OCI-LY7 (cell line): ENCODE measurements at regions of chr1 and their contacts with region 1.

Region 1: DNA sequence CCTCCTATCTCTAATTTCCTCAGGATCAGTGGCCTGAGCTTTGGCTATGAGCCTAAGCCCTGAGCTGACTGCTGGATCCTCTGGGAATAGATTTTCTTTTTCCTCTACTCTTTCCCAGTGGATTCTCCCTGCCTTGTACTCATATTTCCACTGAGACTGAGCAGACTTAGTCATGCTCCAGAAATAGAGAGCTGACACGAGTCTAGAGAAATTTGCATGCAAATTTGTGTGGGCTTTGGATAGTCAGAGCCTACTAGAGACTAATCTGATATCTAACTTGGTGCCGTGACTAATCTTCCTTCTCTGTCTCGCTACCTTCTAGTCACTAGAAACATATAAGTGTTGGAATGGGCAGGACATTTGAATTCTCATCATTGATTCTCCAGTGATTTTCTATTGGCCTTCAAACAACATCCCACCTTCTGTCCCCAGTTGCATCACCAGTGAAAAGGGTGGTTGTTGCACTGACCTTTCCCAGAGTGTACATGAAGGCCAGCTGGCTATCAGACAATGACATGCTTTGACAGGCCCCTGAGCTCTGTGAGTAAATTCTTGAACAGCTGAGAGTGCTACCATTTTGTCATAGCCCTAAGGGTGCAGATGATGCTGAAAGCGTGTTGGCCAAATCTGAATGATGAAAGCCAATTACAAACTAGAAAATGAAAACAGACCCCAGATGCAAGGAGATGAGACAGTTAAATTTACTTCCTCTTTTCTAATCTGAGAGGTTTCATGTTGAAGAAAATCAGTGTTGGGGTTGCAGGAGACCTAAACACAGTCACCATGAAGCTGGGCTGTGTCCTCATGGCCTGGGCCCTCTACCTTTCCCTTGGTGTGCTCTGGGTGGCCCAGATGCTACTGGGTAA is at the start of gene FCRLA:
- DNase-seq: peak; percentile 94
- H3K4me3 ChIP-seq: peak within 1 kb of the TSS; percentile 80
- H3K27ac ChIP-seq: peak within 1 kb of the TSS; percentile 96
- H3K4me1 ChIP-seq: peaks cover 55% of the 10 kb centered on the region
- CTCF ChIP-seq: no peak
- total RNA-seq, gene FCRLA: 524 and 672 TPM in 2 replicates

Region 2: GRCh38 chr1:161718559-161719324 is 12.0 kb after region 1 on chr1:
- CTCF ChIA-PET with region 1: interaction called, 4 read pairs
- POLR2A ChIA-PET with region 1: interaction called, 55 read pairs
- intact Hi-C with region 1: no loop called
- DNase-seq: peak; percentile 82
- H3K4me3 ChIP-seq: peak overlapping the region; percentile 52
- H3K27ac ChIP-seq: peak overlapping the region; percentile 95
- H3K4me1 ChIP-seq: peaks cover 83% of the 10 kb centered on the region
- CTCF ChIP-seq: no peak

Region 3: GRCh38 chr1:161726596-161727457 is 20.1 kb after region 1 on chr1:
- CTCF ChIA-PET with region 1: interaction called, 4 read pairs
- POLR2A ChIA-PET with region 1: interaction called, 44 read pairs
- intact Hi-C with region 1: loop called (anchors 1 kb)
- DNase-seq: peak; percentile 89
- H3K4me3 ChIP-seq: peak overlapping the region; percentile 77
- H3K27ac ChIP-seq: peak overlapping the region; percentile 61
- H3K4me1 ChIP-seq: peaks cover 36% of the 10 kb centered on the region
- CTCF ChIP-seq: no peak

Region 4: DNA sequence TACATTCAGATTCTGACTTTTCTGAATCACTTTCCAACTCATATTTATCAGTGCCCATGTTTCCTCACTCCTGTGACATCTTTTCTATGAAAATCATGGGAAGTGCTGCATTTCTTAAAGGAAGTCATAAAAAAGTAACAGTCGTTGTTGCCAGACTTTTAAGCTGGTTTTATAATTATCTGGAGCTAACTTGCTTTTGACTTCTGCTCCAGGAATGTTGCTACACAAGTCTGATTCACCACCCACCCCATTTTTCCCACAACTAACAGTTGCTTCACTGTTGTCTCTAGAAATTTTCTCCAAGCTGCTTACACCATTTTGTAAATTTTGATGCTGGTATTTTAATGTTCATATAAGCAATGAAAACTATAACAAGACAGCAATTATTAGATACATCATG is 26.8 kb after region 1 on chr1:
- CTCF ChIA-PET with region 1: interaction called, 12 read pairs
- POLR2A ChIA-PET with region 1: interaction called, 64 read pairs
- intact Hi-C with region 1: loop called (anchors 1 kb)
- DNase-seq: no peak
- H3K4me3 ChIP-seq: no peak overlapping the region
- H3K27ac ChIP-seq: no peak overlapping the region
- H3K4me1 ChIP-seq: peaks cover 19% of the 10 kb centered on the region
- CTCF ChIP-seq: no peak

Region 5: DNA sequence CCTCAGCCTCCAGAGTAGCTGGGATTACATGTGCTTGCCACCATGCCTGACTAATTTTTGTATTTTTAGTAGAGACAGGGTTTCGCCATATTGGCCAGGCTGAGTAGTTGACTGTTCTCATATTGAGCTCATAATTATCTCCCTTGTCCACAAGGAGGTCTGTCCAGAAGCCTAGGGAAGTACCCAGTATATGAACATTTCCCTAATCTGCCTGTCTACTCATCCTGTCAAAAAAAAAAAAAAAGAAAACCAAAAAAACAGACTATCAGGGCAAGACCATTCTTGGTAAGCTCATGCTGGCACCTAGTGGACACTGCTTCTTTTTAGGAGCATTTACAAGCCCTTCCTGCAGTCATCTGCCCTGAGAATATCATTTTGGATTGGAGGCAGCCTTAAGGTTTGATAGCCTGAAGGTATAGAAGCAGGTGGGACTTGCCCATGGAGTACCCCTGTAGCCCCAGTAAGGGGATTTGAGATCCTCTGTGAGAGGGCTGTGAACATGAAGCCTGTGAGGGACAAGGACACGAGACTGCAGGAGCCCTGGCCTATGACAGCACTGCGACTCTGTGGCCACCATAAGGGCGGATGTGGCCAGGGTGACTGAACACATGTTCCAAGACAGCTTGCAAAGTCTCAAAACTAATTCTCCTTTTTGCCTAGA is 32.0 kb after region 1 on chr1:
- CTCF ChIA-PET with region 1: interaction called, 12 read pairs
- POLR2A ChIA-PET with region 1: interaction called, 64 read pairs
- intact Hi-C with region 1: loop called (anchors 1 kb)
- DNase-seq: peak; percentile 89
- H3K4me3 ChIP-seq: no peak overlapping the region
- H3K27ac ChIP-seq: peak overlapping the region; percentile 50
- H3K4me1 ChIP-seq: peaks cover 48% of the 10 kb centered on the region
- CTCF ChIP-seq: peak; percentile 85

Region 6: DNA sequence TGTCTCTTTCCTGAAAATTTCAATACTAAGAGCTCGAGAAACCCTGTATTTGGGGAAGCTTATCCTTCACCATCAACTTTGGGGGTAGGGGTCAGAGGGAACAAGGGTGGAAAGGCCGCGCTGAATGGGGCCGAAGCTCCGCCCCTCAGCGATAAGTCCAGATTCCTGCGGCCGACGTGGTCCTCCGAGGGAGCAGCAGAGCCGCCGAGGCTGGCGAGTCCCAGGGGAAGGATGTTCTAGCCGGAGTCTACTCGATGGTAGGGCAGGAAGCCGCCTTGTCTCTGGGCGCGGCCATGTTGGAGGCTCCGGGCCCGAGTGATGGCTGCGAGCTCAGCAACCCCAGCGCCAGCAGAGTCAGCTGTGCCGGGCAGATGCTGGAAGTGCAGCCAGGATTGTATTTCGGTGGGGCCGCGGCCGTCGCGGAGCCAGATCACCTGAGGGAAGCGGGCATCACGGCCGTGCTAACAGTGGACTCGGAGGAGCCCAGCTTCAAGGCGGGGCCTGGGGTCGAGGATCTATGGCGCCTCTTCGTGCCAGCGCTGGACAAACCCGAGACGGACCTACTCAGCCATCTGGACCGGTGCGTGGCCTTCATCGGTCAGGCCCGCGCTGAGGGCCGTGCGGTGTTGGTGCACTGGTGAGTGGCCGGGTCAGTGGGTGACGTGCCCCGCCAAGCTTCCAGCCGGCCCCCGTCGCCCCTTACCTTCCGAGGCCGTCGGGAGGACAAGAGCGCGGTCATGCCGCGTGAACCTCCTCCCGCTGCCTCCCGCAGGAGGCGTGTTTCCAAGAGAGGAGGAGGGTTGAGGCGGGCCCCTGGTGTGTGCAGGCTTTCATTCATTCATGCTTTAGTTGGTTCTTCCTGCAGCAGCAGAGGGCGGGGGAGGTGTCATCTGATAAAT is 43.0 kb after region 1 on chr1 and contains the start of gene DUSP12:
- CTCF ChIA-PET with region 1: no interaction called
- POLR2A ChIA-PET with region 1: interaction called, 14 read pairs
- intact Hi-C with region 1: no loop called
- DNase-seq: peak; percentile 98
- H3K4me3 ChIP-seq: peak within 1 kb of the TSS; percentile 92
- H3K27ac ChIP-seq: peak within 1 kb of the TSS; percentile 75
- H3K4me1 ChIP-seq: peaks cover 28% of the 10 kb centered on the region
- CTCF ChIP-seq: peak; percentile 74
- total RNA-seq, gene DUSP12: 43.9 and 71.5 TPM in 2 replicates

Region 7: GRCh38 chr1:162497723-162498500 is 791.2 kb after region 1 on chr1 and contains the start of gene UHMK1:
- CTCF ChIA-PET with region 1: no interaction called
- POLR2A ChIA-PET with region 1: no interaction called
- intact Hi-C with region 1: loop called (anchors 5 kb)
- DNase-seq: peak; percentile 95
- H3K4me3 ChIP-seq: peak within 1 kb of the TSS; percentile 95
- H3K27ac ChIP-seq: peak within 1 kb of the TSS; percentile 93
- H3K4me1 ChIP-seq: peaks cover 23% of the 10 kb centered on the region
- CTCF ChIP-seq: 0 out of 2 replicates have a peak, but pooled peaks have one; percentile 26
- total RNA-seq, gene UHMK1: 27.7 and 27.8 TPM in 2 replicates